IMR-90 (cell line): ENCODE measurements at regions of chr1 and their contacts with region 1.

Region 1: GRCh38 chr1:31775210-31775999 is 11.3 kb upstream of the ADGRB2 start:
- DNase-seq: no peak
- ATAC-seq: no peak
- H3K4me3 ChIP-seq: no peak overlapping the region
- H3K27ac ChIP-seq: no peak overlapping the region
- H3K4me1 ChIP-seq: peaks cover 3% of the 10 kb centered on the region; the same call in 1 of the 2 replicates
- H3K27me3 ChIP-seq: peaks cover 61% of the 10 kb centered on the region
- CTCF ChIP-seq: no peak
- POLR2A ChIP-seq: no peak
- RAD21 ChIP-seq: no peak

Region 2: GRCh38 chr1:31723828-31724359 is 51.5 kb before region 1 on chr1:
- CTCF ChIA-PET with region 1: no interaction called
- POLR2A ChIA-PET with region 1: no interaction called
- dilution Hi-C with region 1: no loop called
- in situ Hi-C with region 1: loop called (anchors 5 kb)
- intact Hi-C with region 1: no loop called
- DNase-seq: peak; percentile 75
- ATAC-seq: peak; percentile 84
- H3K4me3 ChIP-seq: no peak overlapping the region
- H3K27ac ChIP-seq: no peak overlapping the region
- H3K4me1 ChIP-seq: no peaks in the 10 kb centered on the region
- H3K27me3 ChIP-seq: peaks cover 7% of the 10 kb centered on the region; the same call in 1 of the 2 replicates
- CTCF ChIP-seq: no peak
- POLR2A ChIP-seq: no peak
- RAD21 ChIP-seq: no peak

Region 3: GRCh38 chr1:31843506-31843905 is 68.1 kb after region 1 on chr1:
- CTCF ChIA-PET with region 1: no interaction called
- POLR2A ChIA-PET with region 1: no interaction called
- dilution Hi-C with region 1: no loop called
- in situ Hi-C with region 1: no loop called
- intact Hi-C with region 1: no loop called
- DNase-seq: peak; percentile 80
- ATAC-seq: peak; percentile 87
- H3K4me3 ChIP-seq: no peak overlapping the region
- H3K27ac ChIP-seq: no peak overlapping the region
- H3K4me1 ChIP-seq: no peaks in the 10 kb centered on the region; the same call in 1 of the 2 replicates
- H3K27me3 ChIP-seq: no peaks in the 10 kb centered on the region
- CTCF ChIP-seq: no peak
- POLR2A ChIP-seq: no peak
- RAD21 ChIP-seq: no peak